Left ventricle myocardium superior (tissue), 1 donor: ENCODE measurements at regions of chr2 and their contacts with region 1.

Region 1: DNA sequence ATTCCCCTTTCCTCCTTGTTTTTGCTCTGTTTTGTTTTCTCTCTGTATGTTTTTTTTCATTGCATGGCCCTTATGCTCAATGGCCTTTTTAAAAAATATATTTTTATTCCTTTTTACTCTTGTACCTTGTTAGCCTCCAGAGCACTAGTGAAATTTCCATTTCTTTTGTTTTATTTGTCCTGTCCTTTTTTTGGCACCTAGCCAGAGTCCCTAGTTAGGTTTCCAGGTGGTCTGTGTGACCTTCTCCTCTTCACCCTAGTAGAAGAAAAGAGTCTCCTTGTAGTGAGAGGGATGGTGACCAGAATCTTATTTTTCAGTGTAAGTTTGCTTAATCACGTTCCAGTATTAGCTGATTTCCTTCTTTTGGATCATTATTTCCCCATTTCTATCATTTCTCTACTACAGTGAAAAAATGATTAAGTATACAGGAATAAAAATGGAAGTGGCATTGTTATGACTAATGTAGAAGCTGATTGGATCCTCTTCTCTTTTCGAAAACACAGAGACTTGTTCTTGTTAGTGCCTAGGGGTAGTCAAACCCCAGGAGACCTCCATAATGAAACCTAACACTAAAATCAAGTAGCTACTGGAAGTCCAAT is 65.9 kb downstream of the NBEAL1 start:
- DNase-seq: no peak
- ATAC-seq: no peak

Region 2: GRCh38 chr2:203820969-203821368 is 740.4 kb after region 1 on chr2:
- intact Hi-C with region 1: loop called (anchors 10 kb)
- DNase-seq: no peak
- ATAC-seq: no peak